ENCODE measurements at regions of chr3 and their contacts with region 1.

Region 1: DNA sequence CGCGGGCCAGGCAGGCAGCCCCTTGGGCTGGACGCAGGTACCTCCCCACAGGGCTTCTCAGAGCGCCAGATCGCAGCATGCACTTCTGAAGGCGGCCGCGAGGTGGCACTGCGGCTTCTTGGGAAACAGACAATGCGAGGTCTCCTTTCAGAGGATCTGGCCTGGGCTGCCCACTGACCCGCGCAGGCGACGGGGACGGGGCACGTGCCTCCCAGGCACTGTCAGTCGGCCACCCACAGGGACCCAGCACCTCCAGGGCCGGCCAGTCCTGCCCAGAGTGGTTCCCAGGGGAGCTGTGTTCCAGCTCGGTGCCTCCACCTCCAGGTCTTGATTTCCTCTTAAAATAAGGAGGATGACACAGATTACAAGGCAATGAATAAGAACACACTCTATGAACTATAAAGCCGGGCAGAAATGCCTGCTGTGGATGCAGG is 24.4 kb upstream of the TXNRD3 start:
- DNase-seq: peak; percentile 61 to 86 (median 75)
- ATAC-seq: peak; percentile 90
- H3K4me3 ChIP-seq: peak overlapping the region in 1 of 2 experiments; percentile 7
- H3K4me3 Mint-ChIP-seq: peak overlapping the region; percentile 37
- H3K27ac ChIP-seq: no peak overlapping the region
- H3K27ac Mint-ChIP-seq: no peak overlapping the region
- H3K4me1 ChIP-seq: peaks cover 3% of the 10 kb centered on the region
- H3K4me1 Mint-ChIP-seq: peaks cover 3% of the 10 kb centered on the region
- H3K27me3 ChIP-seq: no peaks in the 10 kb centered on the region
- H3K27me3 Mint-ChIP-seq: peaks cover 6% of the 10 kb centered on the region
- CTCF ChIP-seq: peak; percentile 96

Region 2: DNA sequence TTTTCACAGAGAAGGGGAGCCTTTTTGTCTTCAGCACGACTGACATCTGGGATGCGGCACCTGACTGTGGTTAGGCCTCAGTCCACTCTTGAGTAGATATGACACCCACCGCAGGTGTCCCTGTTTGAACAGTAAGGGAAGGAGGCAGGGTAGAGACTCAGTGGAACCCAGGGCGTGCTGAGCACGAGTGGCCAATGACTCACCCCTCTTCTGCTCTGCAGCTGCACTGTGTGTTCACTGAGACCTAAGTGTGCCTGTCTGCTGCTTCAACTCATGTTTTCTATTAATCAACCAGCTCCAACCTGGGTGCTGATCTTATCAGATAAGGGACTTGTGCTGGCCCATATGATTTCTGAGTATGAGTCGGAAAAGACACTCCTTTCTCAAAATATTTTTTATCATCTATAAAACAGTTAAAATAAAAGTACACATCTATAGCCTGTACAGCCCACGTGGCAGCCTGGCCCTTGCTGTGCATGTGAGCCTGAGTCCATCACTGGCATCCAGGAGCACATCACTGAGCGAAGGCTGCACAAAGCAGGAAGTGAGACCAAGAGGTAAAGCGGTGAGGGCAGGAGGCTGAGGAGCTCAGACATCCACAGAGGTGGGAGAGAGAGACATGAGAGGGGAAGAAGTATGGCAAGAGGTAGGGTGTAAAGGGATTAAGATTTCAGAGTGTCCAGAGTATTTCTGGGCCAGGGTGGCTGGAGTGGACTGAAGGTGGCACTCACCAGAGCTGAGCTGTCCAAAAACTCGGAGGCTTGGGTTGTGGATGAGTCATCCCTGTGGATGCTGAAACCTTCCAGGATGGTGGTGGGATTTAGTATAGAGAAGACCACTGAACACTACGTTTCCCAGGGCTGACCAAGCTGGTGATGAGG is 644.6 kb before region 1 on chr3:
- CTCF ChIA-PET with region 1: no interaction called
- POLR2A ChIA-PET with region 1: no interaction called
- intact Hi-C with region 1: no loop called
- DNase-seq: peak in 2 of 9 experiments; percentile 8 to 41
- ATAC-seq: no peak
- H3K4me3 ChIP-seq: no peak overlapping the region
- H3K4me3 Mint-ChIP-seq: no peak overlapping the region
- H3K27ac ChIP-seq: no peak overlapping the region
- H3K27ac Mint-ChIP-seq: no peak overlapping the region
- H3K4me1 ChIP-seq: no peaks in the 10 kb centered on the region
- H3K4me1 Mint-ChIP-seq: no peaks in the 10 kb centered on the region
- H3K27me3 ChIP-seq: no peaks in the 10 kb centered on the region
- H3K27me3 Mint-ChIP-seq: no peaks in the 10 kb centered on the region
- CTCF ChIP-seq: no peak

Region 3: DNA sequence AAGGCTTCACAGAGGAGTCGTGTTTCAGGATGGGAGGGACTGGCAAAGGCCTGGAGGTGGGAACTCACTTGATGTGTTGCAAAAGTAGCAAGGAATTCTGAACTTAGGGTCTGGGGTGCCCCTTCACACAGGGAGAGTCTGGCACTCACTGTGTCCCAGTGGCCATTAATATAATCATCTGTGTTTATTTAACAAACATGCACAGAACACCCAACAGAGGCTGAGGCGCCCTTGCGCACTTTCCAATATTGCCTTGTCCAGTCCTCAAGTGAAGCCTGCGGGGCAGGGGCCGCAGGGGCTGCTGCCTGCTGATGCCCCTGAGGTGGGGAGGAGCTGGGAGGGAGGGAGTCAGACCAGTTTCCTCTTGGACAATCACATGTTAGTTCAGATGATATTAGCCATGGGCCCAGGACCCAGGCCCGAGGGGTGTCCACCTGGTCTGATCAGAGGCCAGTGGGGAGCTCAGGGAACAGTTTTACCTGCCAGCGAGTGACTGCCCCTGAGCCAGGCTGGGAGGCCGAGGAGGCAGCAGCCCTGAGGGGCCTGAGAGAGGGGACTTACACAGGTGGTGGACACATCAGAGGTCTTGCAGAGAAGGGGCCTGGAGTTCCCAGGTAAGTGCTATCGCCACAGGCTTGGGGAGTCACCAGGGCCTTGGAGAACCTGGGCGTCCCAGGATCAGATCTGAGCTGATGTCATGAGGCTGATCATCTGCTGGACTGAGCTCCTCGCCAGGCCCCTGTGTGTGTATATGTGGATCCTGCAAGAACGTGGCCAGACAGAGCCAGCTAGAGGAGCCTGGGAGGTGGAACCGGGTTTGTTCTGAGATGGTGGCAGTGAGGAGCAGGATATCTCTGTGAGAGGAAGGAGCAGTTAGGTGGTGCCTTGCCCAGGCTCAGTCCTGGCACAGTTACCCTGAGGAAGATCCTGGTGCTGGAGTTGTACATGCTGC is 10.6 kb before region 1 on chr3:
- CTCF ChIA-PET with region 1: interaction called, 15 read pairs
- POLR2A ChIA-PET with region 1: no interaction called
- intact Hi-C with region 1: no loop called
- DNase-seq: no peak
- ATAC-seq: no peak
- H3K4me3 ChIP-seq: no peak overlapping the region
- H3K4me3 Mint-ChIP-seq: no peak overlapping the region
- H3K27ac ChIP-seq: no peak overlapping the region
- H3K27ac Mint-ChIP-seq: no peak overlapping the region
- H3K4me1 ChIP-seq: no peaks in the 10 kb centered on the region
- H3K4me1 Mint-ChIP-seq: no peaks in the 10 kb centered on the region
- H3K27me3 ChIP-seq: no peaks in the 10 kb centered on the region
- H3K27me3 Mint-ChIP-seq: no peaks in the 10 kb centered on the region
- CTCF ChIP-seq: no peak

Region 4: GRCh38 chr3:127455541-127456450 is 776.5 kb after region 1 on chr3:
- CTCF ChIA-PET with region 1: interaction called, 10 read pairs
- POLR2A ChIA-PET with region 1: no interaction called
- intact Hi-C with region 1: loop called in 1 of 2 experiments (anchors 1 kb)
- DNase-seq: peak in 7 of 9 experiments; percentile 4 to 47 (median 36)
- ATAC-seq: peak; percentile 65
- H3K4me3 ChIP-seq: no peak overlapping the region
- H3K4me3 Mint-ChIP-seq: no peak overlapping the region
- H3K27ac ChIP-seq: no peak overlapping the region
- H3K27ac Mint-ChIP-seq: no peak overlapping the region
- H3K4me1 ChIP-seq: peaks cover 11% of the 10 kb centered on the region
- H3K4me1 Mint-ChIP-seq: peaks cover 11% of the 10 kb centered on the region
- H3K27me3 ChIP-seq: peaks cover 9 to 18% of the 10 kb centered on the region in 2 experiments
- H3K27me3 Mint-ChIP-seq: peaks cover 70% of the 10 kb centered on the region
- CTCF ChIP-seq: peak; percentile 45